ENCODE measurements at regions of chr1 and their contacts with region 1.

Region 1: DNA sequence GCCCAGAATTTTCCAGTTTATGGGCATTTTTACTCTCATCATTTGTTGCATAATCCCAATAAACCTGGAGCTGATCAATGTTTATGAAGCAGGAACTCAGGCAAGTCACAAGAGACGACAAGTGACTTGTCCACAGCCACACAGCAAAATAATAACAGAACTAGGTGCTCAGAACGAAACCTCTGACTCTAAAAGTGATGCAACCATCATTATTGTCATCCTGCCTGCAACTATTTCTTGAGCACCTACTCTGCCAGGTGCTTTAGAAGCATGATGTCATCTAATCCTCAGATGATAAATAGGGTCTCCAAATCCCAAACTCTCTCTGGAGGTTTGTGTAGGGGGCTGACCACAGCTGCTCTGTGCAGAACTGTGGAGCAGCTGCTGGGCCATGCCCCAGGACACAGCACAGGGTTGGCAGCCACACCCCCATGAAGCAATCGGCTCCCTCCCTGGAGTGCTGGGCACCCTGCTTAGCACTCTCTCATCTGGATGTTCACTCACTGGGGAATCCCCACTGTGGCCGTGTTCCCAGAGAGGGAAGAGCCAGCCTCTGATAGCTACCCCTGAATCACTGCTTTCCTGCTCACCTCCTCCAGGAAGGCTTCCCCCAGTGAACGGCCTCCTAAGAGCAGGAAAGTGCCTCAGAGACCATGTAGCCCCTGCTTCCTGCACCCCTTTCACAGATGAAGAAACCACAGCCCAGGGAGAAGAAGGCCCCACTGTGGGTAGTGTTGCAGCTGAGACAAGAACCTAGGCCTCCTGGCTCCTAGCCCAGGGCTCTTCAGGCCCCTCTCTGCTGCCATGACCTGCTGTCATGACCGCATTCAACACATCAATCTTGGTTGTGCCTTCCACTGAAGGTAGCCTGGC is 2.1 kb downstream of the TTC22 start:
- DNase-seq: peak; percentile 41
- H3K4me3 Mint-ChIP-seq: peak overlapping the region; percentile 89
- H3K27ac Mint-ChIP-seq: no peak overlapping the region
- H3K4me1 Mint-ChIP-seq: peaks cover 87% of the 10 kb centered on the region
- H3K27me3 Mint-ChIP-seq: no peaks in the 10 kb centered on the region
- CTCF ChIP-seq: no peak

Region 2: DNA sequence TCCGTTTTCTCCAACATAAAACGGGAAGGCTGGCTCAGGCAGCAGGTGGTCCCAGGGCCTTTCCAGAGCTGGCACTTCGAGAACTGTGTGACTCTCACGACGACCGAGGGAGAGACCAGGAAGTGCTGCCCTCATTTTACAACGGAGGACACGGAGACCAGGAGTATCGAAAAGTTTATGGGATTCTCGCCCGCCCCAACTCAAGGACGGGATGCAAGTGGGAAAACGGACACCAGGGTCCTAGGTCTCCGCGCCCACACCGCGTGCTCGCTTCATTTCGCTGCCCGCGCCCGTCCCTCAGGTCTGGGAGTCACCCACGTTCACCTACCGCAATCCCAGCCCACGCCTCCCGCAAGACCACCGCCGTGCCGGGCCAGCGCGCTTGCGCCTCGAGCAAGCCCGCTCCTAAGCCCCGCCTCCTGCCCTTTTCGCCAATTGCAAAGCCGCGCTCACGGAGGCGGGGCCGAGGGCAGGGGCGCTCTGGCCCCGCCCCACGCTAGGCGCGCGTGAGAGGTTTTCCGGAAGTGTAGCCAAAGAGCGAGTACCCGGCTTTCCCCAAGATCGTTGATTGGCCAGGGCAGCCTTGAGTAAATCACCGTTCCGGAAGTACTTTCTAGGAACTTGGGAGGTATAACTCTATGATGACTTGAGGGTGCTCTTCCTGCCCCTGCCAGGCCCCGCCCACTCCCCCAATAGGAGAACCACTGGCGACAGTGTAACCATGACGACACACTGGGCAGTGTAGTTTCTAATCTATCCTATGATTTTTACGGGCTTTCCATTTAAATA is 34.7 kb before region 1 on chr1 and contains the start of gene PARS2:
- CTCF ChIA-PET with region 1: interaction called, 9 read pairs
- intact Hi-C with region 1: loop called (anchors 5 kb)
- DNase-seq: peak; percentile 97
- H3K4me3 Mint-ChIP-seq: peak within 1 kb of the TSS; percentile 91
- H3K27ac Mint-ChIP-seq: peak within 1 kb of the TSS; percentile 93
- H3K4me1 Mint-ChIP-seq: peaks cover 17% of the 10 kb centered on the region
- H3K27me3 Mint-ChIP-seq: no peaks in the 10 kb centered on the region
- CTCF ChIP-seq: no peak
- total RNA-seq, gene PARS2: 9.0 and 10.0 TPM in 2 replicates

Region 3: GRCh38 chr1:55071477-55071876 is 272.5 kb after region 1 on chr1:
- CTCF ChIA-PET with region 1: no interaction called
- intact Hi-C with region 1: no loop called
- DNase-seq: peak; percentile 42
- H3K4me3 Mint-ChIP-seq: no peak overlapping the region
- H3K27ac Mint-ChIP-seq: no peak overlapping the region
- H3K4me1 Mint-ChIP-seq: no peaks in the 10 kb centered on the region
- H3K27me3 Mint-ChIP-seq: no peaks in the 10 kb centered on the region
- CTCF ChIP-seq: peak; percentile 20